ENCODE measurements at regions of chr15 and their contacts with region 1.

Region 1: DNA sequence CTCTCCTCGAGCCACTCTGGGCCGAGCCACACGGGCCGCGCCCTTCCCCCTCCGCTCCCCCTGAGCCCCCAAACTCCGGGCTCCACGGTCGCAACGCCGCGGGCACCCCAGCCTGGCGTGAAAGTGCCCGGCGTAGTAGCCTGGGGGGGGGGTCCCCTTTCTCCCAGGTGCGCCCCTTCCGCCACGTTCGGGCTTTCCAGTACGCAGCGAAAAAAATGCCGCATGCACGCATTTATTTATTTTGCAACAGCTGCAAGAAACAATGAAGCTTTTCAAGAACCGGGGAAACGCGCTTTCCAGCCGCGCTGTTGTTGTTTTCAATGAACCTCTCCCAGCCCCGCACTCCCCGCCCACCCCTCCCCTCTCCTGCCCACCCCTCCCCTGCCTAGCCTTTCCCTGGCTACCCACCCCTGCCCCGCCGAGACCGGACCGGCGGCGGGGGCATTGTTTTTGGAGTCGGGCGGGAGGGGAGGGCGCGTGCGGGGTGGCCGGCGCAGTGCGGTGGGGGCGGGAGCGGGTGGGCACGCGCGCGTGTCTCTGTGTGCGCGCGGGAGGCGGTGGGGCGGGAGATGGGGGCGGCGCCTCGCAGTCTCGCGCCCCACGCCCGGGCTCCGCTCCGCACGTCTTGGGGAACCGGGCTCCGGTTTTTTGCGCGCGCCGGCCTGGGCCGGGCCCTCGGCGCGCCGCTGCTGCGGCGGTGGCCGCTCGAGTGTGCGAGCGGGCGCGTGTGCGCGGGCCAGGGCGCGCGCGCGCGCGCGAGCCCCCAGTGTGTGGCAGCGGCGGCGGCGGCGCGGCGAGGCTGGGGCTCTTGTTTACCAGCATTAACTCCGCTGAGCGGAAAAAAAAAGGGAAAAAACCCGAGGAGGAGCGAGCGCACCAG is at the start of gene IGF1R:
- ATAC-seq: peak; percentile 45 to 69 (median 61)
- H3K4me3 ChIP-seq: peak within 1 kb of the TSS; percentile 71 to 99 (median 84)
- H3K27ac ChIP-seq: peak within 1 kb of the TSS; percentile 94 to 96
- H3K4me1 ChIP-seq: peaks cover 0 to 7% of the 10 kb centered on the region in 2 donors
- total RNA-seq, gene IGF1R: 12.5 to 43.5 (median 26.1) TPM

Region 2: GRCh38 chr15:98518823-98519561 is 129.0 kb before region 1 on chr15:
- in situ Hi-C with region 1: loop called in 1 of 9 experiments (anchors 25 kb)
- ATAC-seq: peak; percentile 79 to 97 (median 88)
- H3K4me3 ChIP-seq: no peak overlapping the region
- H3K27ac ChIP-seq: no peak overlapping the region
- H3K4me1 ChIP-seq: peaks cover 2 to 4% of the 10 kb centered on the region in 2 donors

Region 3: GRCh38 chr15:98548154-98548971 is 99.7 kb before region 1 on chr15:
- in situ Hi-C with region 1: loop called in 1 of 9 experiments (anchors 25 kb)
- ATAC-seq: peak; percentile 68 to 85 (median 81)
- H3K4me3 ChIP-seq: peak overlapping the region; percentile 43 to 53 (median 46)
- H3K27ac ChIP-seq: peak overlapping the region in 1 of 2 donors; percentile 66
- H3K4me1 ChIP-seq: peaks cover 5 to 7% of the 10 kb centered on the region in 2 donors

Region 4: GRCh38 chr15:98865397-98866339 is 217.7 kb after region 1 on chr15:
- in situ Hi-C with region 1: loop called in 2 of 9 experiments (anchors 10 kb)
- ATAC-seq: peak; percentile 48 to 93 (median 86)
- H3K4me3 ChIP-seq: peak overlapping the region; percentile 32 to 43 (median 32)
- H3K27ac ChIP-seq: peak overlapping the region; percentile 79 to 91
- H3K4me1 ChIP-seq: peaks cover 3 to 10% of the 10 kb centered on the region in 2 donors

Region 5: DNA sequence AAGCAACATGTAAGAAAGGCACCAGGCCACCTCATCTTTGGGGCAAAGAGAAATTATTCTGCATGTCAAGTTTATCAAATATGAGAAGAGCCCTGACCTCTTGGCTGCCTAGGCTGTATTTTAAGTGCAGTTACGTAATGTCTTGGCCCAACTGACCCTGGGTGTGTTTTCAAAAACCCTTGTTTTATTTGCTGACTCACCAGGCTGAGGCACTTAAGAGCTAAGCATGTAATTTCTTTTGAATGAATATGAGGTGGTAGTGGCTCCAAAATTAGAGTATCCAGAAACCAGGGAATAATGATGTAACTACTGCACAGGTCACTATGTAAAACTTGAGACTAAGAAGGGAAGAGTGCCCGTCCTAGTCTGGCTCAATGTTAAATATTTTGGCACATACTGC is 335.3 kb after region 1 on chr15:
- in situ Hi-C with region 1: no loop called
- ATAC-seq: peak in 6 of 8 experiments; percentile 25 to 97 (median 66)
- H3K4me3 ChIP-seq: no peak overlapping the region
- H3K27ac ChIP-seq: no peak overlapping the region
- H3K4me1 ChIP-seq: no peaks in the 10 kb centered on the region

Region 6: GRCh38 chr15:99181545-99181971 is 533.5 kb after region 1 on chr15:
- in situ Hi-C with region 1: no loop called
- ATAC-seq: no peak
- H3K4me3 ChIP-seq: no peak overlapping the region
- H3K27ac ChIP-seq: no peak overlapping the region
- H3K4me1 ChIP-seq: peaks cover 4 to 10% of the 10 kb centered on the region in 2 donors